ENCODE measurements at regions of chr9 and their contacts with region 1.

Region 1: DNA sequence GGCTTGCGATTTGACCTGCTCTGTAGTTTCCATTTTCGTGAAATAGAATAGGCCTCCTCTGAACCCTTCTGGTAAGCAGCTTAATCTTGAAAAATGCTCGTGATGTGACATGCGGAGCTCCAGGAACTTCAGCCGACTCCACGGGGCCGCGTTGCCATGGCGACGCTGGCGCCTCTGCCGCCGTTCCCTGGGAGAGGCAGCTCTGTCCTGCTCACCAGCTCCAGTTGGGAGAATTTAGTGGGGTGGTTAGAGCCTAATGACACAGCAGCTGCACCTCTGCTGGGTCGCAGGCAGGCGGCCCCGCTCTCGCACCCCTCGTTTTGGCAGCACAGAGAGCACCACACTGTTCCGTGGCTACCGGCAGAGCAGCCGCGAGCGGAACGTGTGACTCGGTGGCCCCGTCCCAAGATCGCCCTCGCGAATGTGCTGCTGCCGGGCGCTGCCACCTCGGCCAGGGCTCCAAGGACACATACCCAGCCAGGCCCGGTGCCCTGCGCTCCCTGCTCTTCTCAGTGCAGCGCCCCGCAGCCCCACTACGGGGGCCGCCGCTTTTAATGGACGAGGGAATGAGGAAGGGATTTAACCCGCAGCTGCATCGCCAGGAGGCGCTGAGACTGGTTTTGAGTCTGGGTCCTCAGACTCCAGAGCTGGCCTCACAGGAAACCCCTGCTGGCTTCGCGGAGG is 131.2 kb upstream of the LMX1B start:
- DNase-seq: peak; percentile 89

Region 2: DNA sequence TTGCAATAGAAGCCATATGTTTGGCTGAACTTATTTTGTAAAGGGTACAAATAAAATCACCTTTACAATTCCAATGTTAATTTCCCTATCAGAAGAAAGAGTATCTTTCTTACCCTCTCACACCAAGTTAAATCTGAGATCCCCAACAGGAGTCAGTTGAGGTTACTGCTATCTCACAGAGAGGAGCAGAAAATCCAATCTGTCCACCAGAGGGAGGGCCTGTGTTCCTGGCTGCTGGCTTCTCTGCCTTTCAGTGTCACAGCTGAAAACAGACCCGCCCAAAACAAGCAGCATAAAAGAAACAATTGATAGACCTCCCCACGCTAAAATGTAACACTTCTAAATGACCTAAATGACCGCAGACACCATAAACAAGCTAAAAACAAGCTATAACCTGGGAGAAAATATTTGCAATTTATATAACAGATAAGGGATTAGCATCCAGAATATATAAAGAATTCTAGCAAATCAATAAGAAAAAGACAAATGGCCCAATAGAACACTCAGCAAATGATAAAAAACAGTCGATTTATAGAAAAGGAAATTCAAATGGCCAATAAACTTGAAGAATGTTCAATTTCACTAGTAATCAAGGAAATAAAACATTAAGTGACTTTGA is 180.4 kb before region 1 on chr9:
- intact Hi-C with region 1: loop called in 1 of 2 experiments (anchors 10 kb)
- DNase-seq: no peak

Measured in posterior vena cava (tissue), 2 donors.